AG04450 (cell line): ENCODE measurements at regions of chr1 and their contacts with region 1.

Region 1: GRCh38 chr1:202998836-202999750 is 8.1 kb upstream of the TMEM183A start:
- DNase-seq: no peak
- H3K4me3 ChIP-seq: no peak overlapping the region
- H3K27ac ChIP-seq: no peak overlapping the region
- H3K27me3 ChIP-seq: peaks cover 9% of the 10 kb centered on the region
- CTCF ChIP-seq: peak; percentile 78

Region 2: GRCh38 chr1:202852163-202852904 is 146.8 kb before region 1 on chr1:
- CTCF ChIA-PET with region 1: no interaction called
- POLR2A ChIA-PET with region 1: no interaction called
- DNase-seq: peak; percentile 18
- H3K4me3 ChIP-seq: no peak overlapping the region
- H3K27ac ChIP-seq: no peak overlapping the region
- H3K27me3 ChIP-seq: no peaks in the 10 kb centered on the region
- CTCF ChIP-seq: peak; percentile 62

Region 3: DNA sequence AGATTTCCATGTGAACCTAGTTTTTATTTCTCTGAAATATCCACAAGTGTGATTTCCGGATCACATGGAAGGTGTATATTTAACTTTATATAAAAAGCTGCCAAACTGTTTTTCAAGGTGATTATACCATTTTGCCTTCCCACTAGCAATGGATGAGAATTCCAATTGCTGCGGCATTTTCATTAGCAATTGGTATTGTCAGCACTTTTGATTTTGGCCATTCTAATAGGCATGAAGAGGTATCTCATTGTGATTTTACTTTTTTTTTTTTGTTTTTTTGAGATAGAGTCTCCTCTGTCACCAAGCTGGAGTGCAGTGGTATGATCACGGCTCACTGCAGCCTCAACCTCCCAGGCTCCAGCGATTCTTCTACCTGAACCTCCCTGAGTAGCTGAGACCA is 27.0 kb before region 1 on chr1:
- CTCF ChIA-PET with region 1: interaction called, 11 read pairs
- POLR2A ChIA-PET with region 1: no interaction called
- DNase-seq: no peak
- H3K4me3 ChIP-seq: no peak overlapping the region
- H3K27ac ChIP-seq: no peak overlapping the region
- H3K27me3 ChIP-seq: peaks cover 12% of the 10 kb centered on the region
- CTCF ChIP-seq: no peak

Region 4: DNA sequence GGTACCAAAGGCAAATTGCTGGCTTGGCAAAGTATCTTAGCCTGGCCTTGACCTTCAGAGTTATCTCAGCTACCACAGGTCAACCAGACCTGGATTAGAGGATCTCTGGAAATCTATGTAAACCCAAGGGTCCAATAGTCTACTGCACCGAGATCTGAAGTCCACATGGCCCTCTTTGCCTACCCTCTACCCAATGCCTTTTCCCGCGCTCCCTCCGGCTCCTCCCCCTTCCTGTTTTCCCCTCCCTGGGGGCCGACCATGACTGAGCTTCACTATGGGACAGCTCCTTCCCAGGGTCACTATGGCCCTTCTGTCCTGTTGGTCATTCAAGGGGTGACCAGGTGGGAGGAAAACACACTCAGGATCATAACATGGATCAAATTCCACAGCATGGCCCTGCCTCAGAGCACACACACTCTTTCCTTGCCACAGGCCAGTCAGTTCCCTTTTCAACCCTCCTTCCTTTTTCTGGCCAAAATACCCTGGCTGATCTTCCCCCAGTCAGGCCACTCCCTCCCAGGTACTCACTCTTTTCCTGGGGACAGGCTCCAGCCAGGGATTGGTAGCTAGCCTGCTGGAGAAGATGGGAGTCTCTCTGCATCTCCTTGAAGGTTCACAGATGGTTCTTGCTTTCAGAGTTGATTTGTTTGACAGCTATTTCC is 11.0 kb before region 1 on chr1:
- CTCF ChIA-PET with region 1: interaction called, 27 read pairs
- POLR2A ChIA-PET with region 1: no interaction called
- DNase-seq: no peak
- H3K4me3 ChIP-seq: no peak overlapping the region
- H3K27ac ChIP-seq: no peak overlapping the region
- H3K27me3 ChIP-seq: peaks cover 45% of the 10 kb centered on the region
- CTCF ChIP-seq: no peak